ENCODE measurements at regions of chr16 and their contacts with region 1.

Region 1: DNA sequence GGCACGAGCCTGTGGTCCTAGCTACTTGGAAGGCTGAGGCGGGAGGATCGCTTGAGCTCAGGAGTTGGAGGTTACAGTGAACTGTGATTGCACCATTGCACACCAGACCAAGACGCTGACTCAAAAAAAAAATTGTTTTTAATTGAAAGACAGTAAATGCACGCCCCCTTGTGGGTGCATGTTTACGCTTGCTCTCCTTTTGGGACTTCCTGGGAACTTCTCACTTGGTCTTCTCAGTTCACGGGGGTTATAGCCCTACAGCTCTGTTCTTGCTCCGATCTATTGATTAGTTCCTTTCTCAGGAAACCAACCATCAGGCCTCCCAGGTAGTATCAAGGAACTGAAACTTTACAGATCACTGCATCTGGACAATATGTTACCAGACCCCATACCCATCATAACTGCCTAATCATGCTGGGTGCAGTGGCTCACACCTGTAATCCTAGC is 14.2 kb upstream of the RIPOR1 start:
- DNase-seq: peak; percentile 77 to 90 (median 80)
- ATAC-seq: peak; percentile 42 to 74 (median 62)
- H3K4me3 ChIP-seq: no peak overlapping the region
- H3K27ac ChIP-seq: no peak overlapping the region
- H3K4me1 ChIP-seq: peaks cover 0 to 29% (median 0%) of the 10 kb centered on the region in 12 donors
- H3K27me3 ChIP-seq: no peaks in the 10 kb centered on the region
- CTCF ChIP-seq: peak; percentile 59 to 83 (median 72)
- POLR2A ChIP-seq: no peak

Region 2: DNA sequence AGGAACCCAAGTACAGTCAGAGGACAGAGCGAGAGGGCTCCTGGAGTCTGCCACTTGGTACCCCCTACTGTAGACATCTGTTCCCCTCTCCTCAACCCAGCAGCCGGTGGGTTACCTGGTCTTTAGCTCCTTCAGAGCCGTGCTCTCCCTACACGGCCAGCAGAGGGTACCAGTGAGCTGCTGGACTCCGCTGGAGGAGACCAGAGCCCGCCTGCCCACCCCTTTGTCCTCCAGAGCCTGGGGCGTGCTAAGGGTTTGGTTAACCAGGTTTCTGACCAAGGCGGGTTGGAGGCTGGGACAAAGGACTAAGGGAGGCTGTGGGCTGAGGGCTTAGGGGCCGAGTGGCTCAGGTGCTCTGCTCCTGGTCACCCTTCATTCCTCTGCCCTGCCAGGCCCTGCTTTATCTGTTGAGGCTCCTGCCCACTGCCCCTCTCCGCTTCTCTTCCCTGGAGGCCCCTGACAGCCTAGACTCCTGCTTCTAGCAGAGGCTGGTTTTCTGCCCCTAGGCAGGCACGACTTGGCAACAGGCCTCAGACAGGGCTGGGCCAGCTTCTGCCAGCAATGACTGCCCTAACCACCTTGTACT is 86.2 kb before region 1 on chr16:
- intact Hi-C with region 1: loop called in 5 of 10 experiments (anchors 1 to 10 kb)
- DNase-seq: peak; percentile 60 to 82 (median 70)
- ATAC-seq: peak; percentile 55 to 85 (median 78)
- H3K4me3 ChIP-seq: no peak overlapping the region
- H3K27ac ChIP-seq: peak overlapping the region in 1 of 12 donors; percentile 18
- H3K4me1 ChIP-seq: peaks cover 0 to 44% (median 15%) of the 10 kb centered on the region in 12 donors
- H3K27me3 ChIP-seq: peaks cover 0 to 35% (median 0%) of the 10 kb centered on the region in 9 donors
- CTCF ChIP-seq: peak; percentile 68 to 92 (median 84)
- POLR2A ChIP-seq: no peak

Region 3: GRCh38 chr16:67490335-67491096 is 23.9 kb before region 1 on chr16:
- intact Hi-C with region 1: loop called in 4 of 10 experiments (anchors 1 to 2 kb)
- DNase-seq: no peak
- ATAC-seq: no peak
- H3K4me3 ChIP-seq: no peak overlapping the region
- H3K27ac ChIP-seq: peak overlapping the region in 6 of 12 donors; percentile 46 to 82 (median 58)
- H3K4me1 ChIP-seq: peaks cover 0 to 75% (median 14%) of the 10 kb centered on the region in 12 donors
- H3K27me3 ChIP-seq: no peaks in the 10 kb centered on the region
- CTCF ChIP-seq: no peak
- POLR2A ChIP-seq: no peak

Region 4: GRCh38 chr16:67499106-67499505 is 15.3 kb before region 1 on chr16:
- intact Hi-C with region 1: loop called in 6 of 10 experiments (anchors 1 to 2 kb)
- DNase-seq: peak in 2 of 5 donors; percentile 29 to 59
- ATAC-seq: peak in 3 of 4 donors; percentile 70 to 74 (median 73)
- H3K4me3 ChIP-seq: no peak overlapping the region
- H3K27ac ChIP-seq: peak overlapping the region in 1 of 12 donors; percentile 24
- H3K4me1 ChIP-seq: peaks cover 0 to 16% (median 4%) of the 10 kb centered on the region in 12 donors
- H3K27me3 ChIP-seq: no peaks in the 10 kb centered on the region
- CTCF ChIP-seq: no peak
- POLR2A ChIP-seq: no peak

Region 5: GRCh38 chr16:67781565-67781921 is 267.1 kb after region 1 on chr16:
- intact Hi-C with region 1: no loop called
- DNase-seq: no peak
- ATAC-seq: peak; percentile 57 to 77 (median 66)
- H3K4me3 ChIP-seq: no peak overlapping the region
- H3K27ac ChIP-seq: peak overlapping the region in 1 of 12 donors; percentile 20
- H3K4me1 ChIP-seq: peaks cover 0 to 30% (median 12%) of the 10 kb centered on the region in 12 donors
- H3K27me3 ChIP-seq: no peaks in the 10 kb centered on the region
- CTCF ChIP-seq: no peak
- POLR2A ChIP-seq: no peak